B cell (primary cell): ENCODE measurements at regions of chr7 and their contacts with region 1.

Region 1: DNA sequence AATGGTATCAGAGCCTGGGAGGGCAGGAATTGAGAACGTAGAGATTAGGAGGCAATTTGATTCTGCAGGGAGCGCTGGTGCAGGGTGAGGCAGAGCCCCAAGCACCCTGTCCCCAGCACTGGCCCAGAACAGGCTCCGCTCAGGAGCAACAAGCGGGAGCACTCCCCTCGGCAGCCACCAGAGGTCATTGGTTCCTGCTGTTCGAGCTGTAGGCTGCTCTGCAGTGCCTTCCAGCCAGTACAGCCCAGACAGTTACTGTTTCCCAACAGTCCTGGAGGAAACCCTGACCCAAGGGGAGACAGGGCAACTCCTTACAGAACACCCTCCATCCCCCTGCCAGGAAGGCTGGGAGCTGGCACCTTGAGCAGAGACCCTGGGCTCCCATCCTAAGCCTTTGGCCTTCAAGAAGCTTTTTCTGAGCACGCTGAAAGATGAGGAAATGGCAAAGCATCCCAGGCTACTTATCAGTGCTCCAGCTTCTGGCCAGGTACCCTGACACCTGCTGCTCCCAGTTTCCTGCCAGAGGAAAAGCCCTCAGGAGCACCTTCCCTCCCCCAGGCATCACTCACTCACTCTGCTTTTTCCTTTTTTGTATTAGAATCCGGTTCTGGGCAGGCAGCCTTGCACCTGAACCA is 71.2 kb upstream of the EFCAB10 start:
- DNase-seq: peak; percentile 67
- ATAC-seq: peak; percentile 78
- H3K4me3 ChIP-seq: no peak overlapping the region
- H3K4me3 Mint-ChIP-seq: no peak overlapping the region
- H3K27ac ChIP-seq: no peak overlapping the region
- H3K27ac Mint-ChIP-seq: no peak overlapping the region
- H3K4me1 ChIP-seq: no peaks in the 10 kb centered on the region
- H3K4me1 Mint-ChIP-seq: peaks cover 1% of the 10 kb centered on the region
- H3K27me3 ChIP-seq: no peaks in the 10 kb centered on the region
- H3K27me3 Mint-ChIP-seq: no peaks in the 10 kb centered on the region
- CTCF ChIP-seq: peak; percentile 80

Region 2: GRCh38 chr7:105522062-105522936 is 130.2 kb before region 1 on chr7 and contains the start of gene PUS7:
- CTCF ChIA-PET with region 1: no interaction called
- POLR2A ChIA-PET with region 1: no interaction called
- intact Hi-C with region 1: no loop called
- DNase-seq: peak; percentile 90
- ATAC-seq: peak; percentile 93
- H3K4me3 ChIP-seq: peak within 1 kb of the TSS; percentile 21 to 70 (median 59)
- H3K4me3 Mint-ChIP-seq: peak within 1 kb of the TSS; percentile 98
- H3K27ac ChIP-seq: peak within 1 kb of the TSS; percentile 57 to 62
- H3K27ac Mint-ChIP-seq: peak within 1 kb of the TSS; percentile 90
- H3K4me1 ChIP-seq: peaks cover 13 to 22% of the 10 kb centered on the region in 2 donors
- H3K4me1 Mint-ChIP-seq: peaks cover 23% of the 10 kb centered on the region
- H3K27me3 ChIP-seq: no peaks in the 10 kb centered on the region
- H3K27me3 Mint-ChIP-seq: no peaks in the 10 kb centered on the region
- CTCF ChIP-seq: no peak
- total RNA-seq, gene PUS7: 7.1 and 7.7 TPM in 2 replicates

Region 3: GRCh38 chr7:105673367-105674142 is 21.1 kb after region 1 on chr7:
- CTCF ChIA-PET with region 1: interaction called, 22 read pairs
- POLR2A ChIA-PET with region 1: no interaction called
- intact Hi-C with region 1: no loop called
- DNase-seq: no peak
- ATAC-seq: no peak
- H3K4me3 ChIP-seq: no peak overlapping the region
- H3K4me3 Mint-ChIP-seq: no peak overlapping the region
- H3K27ac ChIP-seq: peak overlapping the region in 1 of 2 donors; percentile 10
- H3K27ac Mint-ChIP-seq: peak overlapping the region; percentile 74
- H3K4me1 ChIP-seq: peaks cover 27 to 38% of the 10 kb centered on the region in 2 donors
- H3K4me1 Mint-ChIP-seq: peaks cover 55% of the 10 kb centered on the region
- H3K27me3 ChIP-seq: no peaks in the 10 kb centered on the region
- H3K27me3 Mint-ChIP-seq: no peaks in the 10 kb centered on the region
- CTCF ChIP-seq: no peak

Region 4: DNA sequence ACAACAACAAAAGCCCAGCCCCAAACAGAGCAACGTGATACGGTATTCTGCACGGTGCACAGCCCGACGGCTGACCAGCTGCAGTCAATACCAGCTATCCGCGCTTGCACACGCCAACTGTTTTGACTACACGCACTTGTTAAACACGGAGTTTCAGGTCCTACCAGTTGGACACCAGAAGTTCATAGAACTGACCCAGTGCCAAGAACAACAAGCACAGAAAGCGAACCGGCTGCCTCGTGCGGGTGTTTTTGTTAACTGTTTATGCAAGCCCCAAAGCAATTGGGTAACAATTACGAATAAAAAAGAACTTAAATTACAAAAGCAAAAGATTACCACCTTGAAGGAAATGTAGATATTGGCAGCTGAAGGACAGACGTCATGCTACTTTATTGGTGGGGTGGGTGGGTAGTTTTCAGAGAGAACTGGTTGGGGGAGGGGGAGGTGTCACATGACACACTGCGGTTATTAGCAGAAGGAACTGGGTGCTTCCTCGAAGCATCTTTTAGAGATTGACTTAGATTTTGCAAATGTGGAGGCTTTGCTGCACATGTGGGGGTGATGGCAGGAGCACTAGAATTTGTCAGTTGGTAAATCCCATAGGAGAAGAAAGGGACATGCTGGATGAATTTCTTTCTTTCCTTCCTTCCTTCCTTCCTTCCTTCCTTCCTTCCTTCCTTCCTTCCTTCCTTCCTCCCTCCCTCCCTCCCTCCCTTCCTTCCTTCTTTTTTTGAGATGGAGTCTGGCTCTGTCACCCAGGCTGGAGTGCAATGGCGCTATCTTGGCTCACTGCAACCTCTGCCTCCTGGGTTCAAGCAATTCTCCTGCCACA is 39.5 kb after region 1 on chr7:
- CTCF ChIA-PET with region 1: interaction called, 9 read pairs
- POLR2A ChIA-PET with region 1: interaction called, 3 read pairs
- intact Hi-C with region 1: loop called (anchors 1 kb)
- DNase-seq: peak; percentile 90
- ATAC-seq: peak; percentile 77
- H3K4me3 ChIP-seq: peak overlapping the region; percentile 61 to 94 (median 80)
- H3K4me3 Mint-ChIP-seq: peak overlapping the region; percentile 95
- H3K27ac ChIP-seq: peak overlapping the region; percentile 90 to 97
- H3K27ac Mint-ChIP-seq: peak overlapping the region; percentile 99
- H3K4me1 ChIP-seq: peaks cover 5 to 29% of the 10 kb centered on the region in 2 donors
- H3K4me1 Mint-ChIP-seq: peaks cover 54% of the 10 kb centered on the region
- H3K27me3 ChIP-seq: no peaks in the 10 kb centered on the region
- H3K27me3 Mint-ChIP-seq: no peaks in the 10 kb centered on the region
- CTCF ChIP-seq: no peak

Region 5: GRCh38 chr7:105769901-105770628 is 117.6 kb after region 1 on chr7:
- CTCF ChIA-PET with region 1: interaction called, 13 read pairs
- POLR2A ChIA-PET with region 1: no interaction called
- intact Hi-C with region 1: no loop called
- DNase-seq: peak; percentile 35
- ATAC-seq: peak; percentile 82
- H3K4me3 ChIP-seq: no peak overlapping the region
- H3K4me3 Mint-ChIP-seq: peak overlapping the region; percentile 67
- H3K27ac ChIP-seq: no peak overlapping the region
- H3K27ac Mint-ChIP-seq: no peak overlapping the region
- H3K4me1 ChIP-seq: peaks cover 7 to 18% of the 10 kb centered on the region in 2 donors
- H3K4me1 Mint-ChIP-seq: peaks cover 35% of the 10 kb centered on the region
- H3K27me3 ChIP-seq: peaks cover 0 to 2% (median under 1%) of the 10 kb centered on the region in 4 experiments
- H3K27me3 Mint-ChIP-seq: peaks cover 5% of the 10 kb centered on the region
- CTCF ChIP-seq: no peak

Region 6: DNA sequence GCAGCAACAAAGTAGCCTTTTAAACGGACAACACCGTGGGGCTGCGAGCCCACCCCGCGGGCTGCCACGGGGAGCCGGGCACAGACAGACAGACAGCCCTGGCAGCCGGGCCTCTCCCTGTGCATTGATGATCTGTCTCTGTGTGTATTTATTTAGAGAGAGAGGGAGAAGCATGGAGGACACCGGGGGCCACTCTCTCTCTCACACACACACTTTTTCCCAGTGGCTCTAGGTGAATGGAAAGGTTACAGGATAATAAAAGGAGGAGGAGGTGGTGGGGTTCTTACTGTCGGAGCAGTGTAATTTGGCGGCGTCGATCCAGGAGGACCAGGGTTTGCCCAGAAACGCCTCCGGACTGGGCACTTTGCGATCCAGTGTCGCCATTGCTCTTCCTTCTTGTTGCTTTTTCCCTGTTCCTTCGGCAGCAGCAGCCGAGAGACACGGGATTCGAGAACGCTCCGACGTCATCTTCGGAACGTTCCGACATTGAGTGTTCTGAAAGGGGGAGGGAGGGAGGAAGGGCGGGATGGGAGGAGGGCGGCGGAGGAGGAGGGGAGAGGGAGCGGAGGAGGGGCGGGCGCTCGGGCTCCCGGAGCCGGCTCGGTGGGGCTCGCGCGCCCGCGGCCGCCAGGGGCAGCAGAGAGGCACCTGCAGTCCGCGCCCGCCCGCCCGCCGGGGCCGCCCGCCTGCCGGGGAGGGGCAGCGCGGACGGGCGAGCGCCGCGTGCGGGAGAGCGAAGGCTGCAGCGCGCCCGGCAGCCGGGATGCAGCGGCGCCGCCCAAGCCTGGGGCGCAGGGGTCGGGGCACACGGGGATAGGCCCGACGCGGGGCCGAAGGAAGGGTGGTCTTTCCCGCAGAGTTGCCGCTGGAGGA is 223.9 kb after region 1 on chr7 and contains the start of gene ATXN7L1:
- CTCF ChIA-PET with region 1: interaction called, 8 read pairs
- POLR2A ChIA-PET with region 1: no interaction called
- intact Hi-C with region 1: loop called (anchors 2 kb)
- DNase-seq: peak; percentile 87
- ATAC-seq: peak; percentile 99
- H3K4me3 ChIP-seq: peak within 1 kb of the TSS; percentile 47 to 68 (median 64)
- H3K4me3 Mint-ChIP-seq: peak within 1 kb of the TSS; percentile 90
- H3K27ac ChIP-seq: no peak within 1 kb of the TSS
- H3K27ac Mint-ChIP-seq: peak within 1 kb of the TSS; percentile 42
- H3K4me1 ChIP-seq: peaks cover 13 to 15% of the 10 kb centered on the region in 2 donors
- H3K4me1 Mint-ChIP-seq: peaks cover 23% of the 10 kb centered on the region
- H3K27me3 ChIP-seq: peaks cover 0 to 25% (median 8%) of the 10 kb centered on the region in 4 experiments
- H3K27me3 Mint-ChIP-seq: peaks cover 14% of the 10 kb centered on the region
- CTCF ChIP-seq: peak; percentile 31
- total RNA-seq, gene ATXN7L1: 37.0 and 40.6 TPM in 2 replicates

Region 7: DNA sequence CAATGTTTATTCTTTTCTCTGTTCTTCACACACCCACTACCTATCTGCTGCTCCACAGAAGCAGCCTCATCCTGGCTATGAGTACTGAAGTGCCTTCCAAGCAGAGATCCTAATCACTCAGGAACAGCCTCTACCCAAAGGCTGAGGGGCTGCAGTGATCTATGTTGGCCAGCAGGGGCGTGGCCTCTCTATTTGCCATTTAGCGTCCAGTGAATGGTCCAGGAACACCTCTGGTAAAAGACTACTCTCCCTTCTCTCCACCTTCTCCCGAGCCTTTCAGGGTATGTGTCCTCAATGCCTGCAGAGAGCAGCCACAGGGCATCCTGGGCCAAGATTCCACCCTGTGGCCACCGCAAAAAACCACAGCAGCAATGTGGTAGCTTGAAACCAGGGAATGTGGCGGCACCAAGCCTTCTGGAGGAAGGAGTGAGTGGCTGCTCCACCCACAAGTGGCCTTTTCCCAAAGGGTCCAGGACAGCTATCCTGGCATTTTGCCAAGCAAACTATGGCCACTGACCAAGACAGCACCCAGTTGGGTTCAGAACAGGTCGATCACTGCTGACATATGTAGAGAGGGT is 388.8 kb after region 1 on chr7:
- CTCF ChIA-PET with region 1: interaction called, 216 read pairs
- POLR2A ChIA-PET with region 1: no interaction called
- intact Hi-C with region 1: loop called (anchors 1 kb)
- DNase-seq: peak; percentile 62
- ATAC-seq: peak; percentile 61
- H3K4me3 ChIP-seq: no peak overlapping the region
- H3K4me3 Mint-ChIP-seq: no peak overlapping the region
- H3K27ac ChIP-seq: no peak overlapping the region
- H3K27ac Mint-ChIP-seq: peak overlapping the region; percentile 5
- H3K4me1 ChIP-seq: peaks cover 14 to 23% of the 10 kb centered on the region in 2 donors
- H3K4me1 Mint-ChIP-seq: peaks cover 13% of the 10 kb centered on the region
- H3K27me3 ChIP-seq: peaks cover 0 to 9% (median 2%) of the 10 kb centered on the region in 4 experiments
- H3K27me3 Mint-ChIP-seq: no peaks in the 10 kb centered on the region
- CTCF ChIP-seq: peak; percentile 90

Region 8: DNA sequence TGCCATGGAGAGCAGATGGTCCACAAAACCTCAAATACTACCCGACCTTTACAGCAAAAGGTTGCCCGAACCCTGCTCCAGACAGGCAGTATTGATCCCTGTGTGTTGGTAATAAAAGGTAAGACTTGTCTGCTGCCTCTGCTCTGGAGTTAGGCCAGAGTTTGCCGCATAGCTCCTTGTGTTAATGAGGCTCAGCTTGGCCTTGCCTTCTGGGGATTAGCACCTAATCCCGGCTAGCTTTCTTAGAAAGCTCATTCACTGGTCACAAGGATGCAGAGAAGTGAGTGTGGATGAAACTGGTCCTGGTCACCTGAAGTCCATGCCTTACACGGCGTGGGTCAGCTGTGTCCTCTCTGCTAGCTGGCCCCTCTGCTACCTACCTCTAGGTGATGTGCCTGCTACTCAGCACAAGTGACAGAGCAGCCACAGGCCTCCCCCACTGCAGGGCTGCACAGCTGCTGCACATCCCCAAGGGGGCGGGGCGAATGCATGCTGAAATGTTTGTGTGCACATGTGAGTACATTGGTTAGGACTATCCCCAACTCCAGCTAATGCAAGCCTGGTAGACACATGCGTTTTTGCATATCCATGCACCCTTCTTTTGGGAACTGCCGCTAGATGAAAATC is 491.3 kb after region 1 on chr7:
- CTCF ChIA-PET with region 1: no interaction called
- POLR2A ChIA-PET with region 1: no interaction called
- intact Hi-C with region 1: no loop called
- DNase-seq: no peak
- ATAC-seq: no peak
- H3K4me3 ChIP-seq: no peak overlapping the region
- H3K4me3 Mint-ChIP-seq: no peak overlapping the region
- H3K27ac ChIP-seq: no peak overlapping the region
- H3K27ac Mint-ChIP-seq: no peak overlapping the region
- H3K4me1 ChIP-seq: peaks cover 0 to 3% of the 10 kb centered on the region in 2 donors
- H3K4me1 Mint-ChIP-seq: peaks cover 9% of the 10 kb centered on the region
- H3K27me3 ChIP-seq: no peaks in the 10 kb centered on the region
- H3K27me3 Mint-ChIP-seq: no peaks in the 10 kb centered on the region
- CTCF ChIP-seq: no peak